Activated B cell treated with CpG ODN at 0.5 μM for 24 hours (primary cell): ENCODE measurements at regions of chr1 and their contacts with region 1.

Region 1: GRCh38 chr1:235160957-235161684 is at the start of gene RBM34:
- DNase-seq: peak; percentile 90
- ATAC-seq: peak; percentile 94
- H3K4me3 Mint-ChIP-seq: peak within 1 kb of the TSS; percentile 96
- H3K27ac Mint-ChIP-seq: peak within 1 kb of the TSS; percentile 99
- H3K4me1 Mint-ChIP-seq: peaks cover 21% of the 10 kb centered on the region
- H3K27me3 Mint-ChIP-seq: no peaks in the 10 kb centered on the region
- CTCF ChIP-seq: no peak
- total RNA-seq, gene RBM34: 122 and 128 TPM in 2 replicates

Region 2: DNA sequence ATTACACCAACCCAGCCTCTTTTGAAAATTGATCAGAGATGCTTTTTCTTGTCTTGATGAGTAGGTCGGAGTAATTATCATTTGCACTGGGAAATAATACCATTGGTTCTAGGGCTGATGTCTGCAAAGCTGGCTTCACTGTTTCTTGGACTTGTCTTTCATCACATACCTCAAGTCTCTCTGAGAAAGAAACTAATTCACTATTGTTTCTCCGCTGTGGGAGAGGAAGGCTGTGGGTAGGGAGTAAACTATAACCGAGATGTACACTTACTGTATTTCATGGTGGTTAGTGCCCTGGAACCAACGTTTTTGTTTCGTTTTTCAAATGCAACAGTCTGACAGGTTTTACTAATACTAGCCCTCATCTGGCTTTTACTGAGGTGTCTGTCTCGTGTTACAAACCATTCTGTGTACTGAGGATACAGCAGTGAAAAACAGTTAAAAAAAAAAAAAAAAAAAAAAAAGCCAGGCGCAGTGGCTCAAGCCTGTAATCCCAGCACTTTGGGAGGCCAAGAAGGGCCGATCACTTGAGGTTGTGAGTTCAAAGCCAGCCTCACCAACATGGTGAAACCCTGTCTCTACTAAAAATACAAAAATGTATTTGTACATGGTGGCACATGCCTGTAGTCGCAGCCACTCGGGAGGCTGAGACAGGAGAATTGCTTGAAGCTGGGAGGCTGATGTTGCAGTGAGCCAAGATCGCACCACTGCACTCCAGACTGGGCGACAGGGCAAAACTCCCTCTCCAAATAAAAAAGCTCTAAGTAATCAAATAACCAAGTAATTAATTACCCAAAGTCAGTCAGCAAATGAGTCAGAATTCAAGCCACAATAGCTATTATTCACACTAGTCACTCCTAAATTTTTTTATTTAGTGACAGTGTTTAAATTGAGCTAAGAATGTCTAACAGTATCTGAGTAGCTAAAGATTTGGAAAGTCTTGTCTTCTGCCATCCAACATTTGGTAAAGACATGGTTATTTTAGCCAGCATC is 55.8 kb before region 1 on chr1:
- CTCF ChIA-PET with region 1: no interaction called
- POLR2A ChIA-PET with region 1: interaction called, 10 read pairs
- intact Hi-C with region 1: loop called (anchors 10 kb)
- DNase-seq: no peak
- ATAC-seq: no peak
- H3K4me3 Mint-ChIP-seq: peak overlapping the region; percentile 67
- H3K27ac Mint-ChIP-seq: peak overlapping the region; percentile 14
- H3K4me1 Mint-ChIP-seq: peaks cover 25% of the 10 kb centered on the region
- H3K27me3 Mint-ChIP-seq: no peaks in the 10 kb centered on the region
- CTCF ChIP-seq: no peak

Region 3: DNA sequence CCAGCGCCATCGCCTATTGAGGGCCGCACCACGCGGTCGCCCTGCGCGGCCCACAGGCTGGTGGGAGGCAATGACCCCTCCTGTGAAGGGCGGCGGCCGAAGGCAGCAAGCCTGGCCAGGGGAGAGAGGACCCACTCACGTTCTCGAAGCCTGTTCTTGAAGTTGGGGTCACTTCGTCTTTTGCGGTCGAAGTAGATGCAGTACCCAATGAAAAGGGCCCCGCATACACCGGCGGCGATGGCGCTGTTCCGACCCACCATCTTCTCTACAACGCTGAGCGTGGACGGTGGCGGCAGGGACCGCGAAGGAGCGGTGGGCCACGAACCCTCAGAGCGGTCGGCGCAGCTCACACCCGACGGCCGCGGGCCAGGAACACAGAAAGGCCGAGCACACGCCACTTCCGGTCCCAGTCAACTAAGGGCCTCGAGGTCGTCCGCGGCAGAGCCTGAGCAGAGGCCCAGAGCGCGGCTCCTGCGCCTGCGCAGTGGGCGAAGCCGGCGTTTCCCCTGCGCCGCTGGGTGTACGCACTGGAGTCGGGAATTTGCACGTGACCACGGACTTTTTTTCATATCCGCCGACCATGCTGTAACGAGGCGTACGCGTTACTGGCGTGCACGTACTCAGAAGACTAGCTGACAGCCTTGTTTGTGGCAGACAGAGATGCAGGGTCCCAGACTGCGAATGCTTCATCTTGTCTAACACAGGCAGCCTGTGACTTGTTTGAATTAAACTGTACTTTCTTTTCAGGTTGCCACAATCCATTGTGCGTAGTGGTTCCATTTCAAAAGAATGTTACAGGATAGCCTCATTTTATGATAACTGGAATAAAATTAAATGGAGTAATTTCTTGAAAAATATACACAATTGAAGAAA is 32.4 kb before region 1 on chr1 and contains the start of gene TOMM20:
- CTCF ChIA-PET with region 1: interaction called, 3 read pairs
- POLR2A ChIA-PET with region 1: interaction called, 24 read pairs
- intact Hi-C with region 1: loop called (anchors 1 kb)
- DNase-seq: peak; percentile 91
- ATAC-seq: peak; percentile 93
- H3K4me3 Mint-ChIP-seq: peak within 1 kb of the TSS; percentile 97
- H3K27ac Mint-ChIP-seq: peak within 1 kb of the TSS; percentile 93
- H3K4me1 Mint-ChIP-seq: peaks cover 41% of the 10 kb centered on the region
- H3K27me3 Mint-ChIP-seq: no peaks in the 10 kb centered on the region
- CTCF ChIP-seq: no peak
- total RNA-seq, gene TOMM20: 80.6 and 82.7 TPM in 2 replicates

Region 4: GRCh38 chr1:235367000-235367908 is 206.1 kb after region 1 on chr1 and contains the start of gene TBCE:
- CTCF ChIA-PET with region 1: no interaction called
- POLR2A ChIA-PET with region 1: interaction called, 3 read pairs
- intact Hi-C with region 1: loop called (anchors 2 kb)
- DNase-seq: peak; percentile 80
- ATAC-seq: peak; percentile 100
- H3K4me3 Mint-ChIP-seq: peak within 1 kb of the TSS; percentile 97
- H3K27ac Mint-ChIP-seq: peak within 1 kb of the TSS; percentile 89
- H3K4me1 Mint-ChIP-seq: peaks cover 29% of the 10 kb centered on the region
- H3K27me3 Mint-ChIP-seq: no peaks in the 10 kb centered on the region
- CTCF ChIP-seq: no peak
- total RNA-seq, gene TBCE: 13.9 and 19.1 TPM in 2 replicates